ENCODE measurements at regions of chr9 and their contacts with region 1.

Region 1: DNA sequence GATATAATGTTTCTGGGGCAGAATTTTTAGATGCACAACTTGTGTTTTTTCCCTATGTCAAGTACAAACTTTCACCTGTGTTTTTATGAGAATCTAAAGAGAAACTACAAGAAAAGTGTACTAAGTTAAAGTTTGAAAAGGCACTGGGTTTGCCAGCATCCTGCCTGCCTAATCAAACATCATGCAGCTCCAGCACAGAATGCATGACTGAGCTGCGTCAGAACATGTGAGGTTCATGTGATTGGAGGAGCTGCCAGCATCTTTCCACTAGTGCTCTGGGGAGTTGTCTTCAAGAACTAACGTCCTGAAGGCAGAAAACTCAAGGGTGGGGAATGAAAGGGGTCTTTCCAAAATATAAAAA is 46.1 kb upstream of the RIC1 start:
- DNase-seq: peak; percentile 88
- H3K4me3 Mint-ChIP-seq: peak overlapping the region; percentile 40
- H3K27ac Mint-ChIP-seq: peak overlapping the region; percentile 92
- H3K4me1 Mint-ChIP-seq: peaks cover 69% of the 10 kb centered on the region
- H3K27me3 Mint-ChIP-seq: no peaks in the 10 kb centered on the region

Region 2: GRCh38 chr9:5450359-5451091 is 132.3 kb before region 1 on chr9 and contains the start of gene CD274:
- intact Hi-C with region 1: loop called (anchors 1 kb)
- DNase-seq: peak; percentile 95
- H3K4me3 Mint-ChIP-seq: peak within 1 kb of the TSS; percentile 90
- H3K27ac Mint-ChIP-seq: peak within 1 kb of the TSS; percentile 90
- H3K4me1 Mint-ChIP-seq: peaks cover 56% of the 10 kb centered on the region
- H3K27me3 Mint-ChIP-seq: no peaks in the 10 kb centered on the region
- total RNA-seq, gene CD274: 52.1 and 57.6 TPM in 2 replicates

Region 3: DNA sequence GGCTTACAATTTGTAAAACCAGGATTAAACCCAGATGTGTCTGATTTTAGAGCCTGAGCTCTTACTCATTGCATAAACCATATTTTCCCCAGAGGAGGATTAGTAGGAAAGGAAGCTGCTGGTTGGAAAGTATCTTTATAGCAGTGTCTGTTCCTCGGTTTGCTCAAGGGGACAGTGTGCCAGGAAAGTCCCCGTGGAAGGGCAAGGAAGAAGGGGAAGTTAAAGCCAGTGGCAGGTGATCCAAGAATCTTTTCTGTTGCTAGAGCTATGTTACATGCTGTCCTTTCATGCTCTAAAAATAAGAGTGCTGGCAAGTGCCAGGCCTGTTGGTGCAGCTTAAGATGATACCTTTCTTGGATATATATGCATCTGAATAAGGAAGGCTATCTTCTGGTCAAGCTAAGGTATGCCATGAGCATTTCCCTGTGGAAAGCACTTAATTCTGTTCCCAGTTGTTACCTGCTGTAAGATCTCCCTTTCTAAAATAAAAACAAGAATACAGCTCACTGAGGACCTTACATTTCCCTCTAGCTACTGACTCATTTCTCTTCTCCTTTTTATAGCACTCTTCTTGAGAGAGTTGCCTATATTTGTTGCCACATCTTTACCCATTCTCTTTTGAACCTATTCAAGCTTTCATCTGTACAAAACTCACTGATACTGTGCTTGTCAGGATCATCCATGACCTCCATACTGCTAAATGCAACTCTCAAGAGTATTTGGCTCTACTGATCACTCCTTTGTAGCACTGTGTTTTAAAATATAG is 64.5 kb before region 1 on chr9:
- intact Hi-C with region 1: loop called (anchors 2 kb)
- DNase-seq: no peak
- H3K4me3 Mint-ChIP-seq: no peak overlapping the region
- H3K27ac Mint-ChIP-seq: peak overlapping the region; percentile 23
- H3K4me1 Mint-ChIP-seq: peaks cover 28% of the 10 kb centered on the region
- H3K27me3 Mint-ChIP-seq: peaks cover 2% of the 10 kb centered on the region

Region 4: DNA sequence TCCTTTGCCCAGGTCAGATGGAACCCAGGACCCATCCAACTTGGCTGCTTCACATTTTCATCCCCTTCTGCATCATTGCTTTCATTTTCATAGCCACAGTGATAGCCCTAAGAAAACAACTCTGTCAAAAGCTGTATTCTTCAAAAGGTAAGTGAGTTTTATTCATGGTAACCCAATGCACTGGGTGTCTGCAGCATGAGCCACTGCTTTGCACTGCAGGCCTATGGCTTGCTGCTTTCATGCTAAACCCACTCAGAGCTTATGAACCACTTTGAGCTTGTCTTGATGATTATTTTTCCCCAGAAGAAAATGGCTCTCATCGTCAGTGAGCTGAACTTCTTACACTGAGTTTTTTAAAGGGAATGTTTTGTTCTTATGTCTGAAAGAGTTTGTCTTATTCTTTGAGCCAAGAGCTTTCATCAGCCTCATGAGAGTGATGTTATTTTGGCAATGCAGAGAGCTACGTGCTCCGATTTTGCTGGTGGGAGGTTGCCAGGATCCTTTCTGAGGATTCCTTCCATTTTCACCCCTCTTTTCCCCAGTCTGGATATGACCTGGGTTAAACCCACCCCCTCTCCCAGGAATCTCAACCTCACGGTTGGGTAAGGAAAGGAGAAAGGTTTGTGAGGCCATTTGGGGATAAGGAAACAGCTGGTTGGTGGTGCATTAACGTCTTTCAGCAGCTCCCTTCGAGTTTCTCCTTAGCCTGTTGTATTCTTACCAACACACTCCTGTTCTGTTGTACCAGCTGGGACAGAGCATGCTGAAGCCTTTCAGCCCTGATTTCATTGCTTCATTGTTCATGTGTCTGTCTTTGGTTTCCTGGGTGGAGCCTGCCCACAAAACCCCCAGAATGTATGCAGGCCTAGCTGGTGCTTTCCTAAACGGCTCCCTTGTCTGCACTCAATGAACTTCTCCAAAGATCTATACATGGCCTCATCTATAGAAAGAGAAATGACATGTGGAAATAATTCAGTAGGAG is 24.9 kb before region 1 on chr9:
- intact Hi-C with region 1: loop called (anchors 1 kb)
- DNase-seq: peak; percentile 91
- H3K4me3 Mint-ChIP-seq: peak overlapping the region; percentile 70
- H3K27ac Mint-ChIP-seq: peak overlapping the region; percentile 94
- H3K4me1 Mint-ChIP-seq: peaks cover 39% of the 10 kb centered on the region
- H3K27me3 Mint-ChIP-seq: no peaks in the 10 kb centered on the region

Region 5: DNA sequence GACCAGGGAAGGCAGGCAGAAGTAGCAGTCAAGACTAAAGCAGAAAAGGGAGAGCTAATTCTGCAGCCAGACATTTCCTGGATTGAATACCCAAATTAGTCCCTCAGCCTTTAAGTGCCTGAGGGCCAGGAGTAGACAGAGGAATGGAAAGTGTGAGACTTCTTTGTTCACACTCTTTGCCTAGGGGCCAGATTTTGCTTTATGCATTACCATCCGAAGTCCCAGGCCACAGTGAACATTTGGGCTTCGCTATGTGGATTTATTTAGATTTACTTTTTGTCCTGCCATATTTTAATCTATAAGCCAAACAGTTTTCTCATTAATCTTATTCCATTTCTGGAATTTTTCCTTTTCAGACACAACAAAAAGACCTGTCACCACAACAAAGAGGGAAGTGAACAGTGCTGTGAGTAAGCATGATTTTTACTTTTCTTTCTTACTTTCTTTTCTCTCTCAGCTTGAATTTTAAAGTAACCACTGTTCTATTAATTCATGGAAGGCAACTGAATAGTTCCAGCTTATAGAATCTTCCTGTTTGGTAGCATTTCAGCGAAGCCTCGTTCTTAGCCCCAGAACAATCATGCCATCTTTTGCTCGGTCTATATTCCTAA is 19.9 kb before region 1 on chr9:
- intact Hi-C with region 1: loop called (anchors 1 kb)
- DNase-seq: no peak
- H3K4me3 Mint-ChIP-seq: no peak overlapping the region
- H3K27ac Mint-ChIP-seq: peak overlapping the region; percentile 5
- H3K4me1 Mint-ChIP-seq: peaks cover 35% of the 10 kb centered on the region
- H3K27me3 Mint-ChIP-seq: no peaks in the 10 kb centered on the region

Region 6: GRCh38 chr9:5764130-5764868 is 181.5 kb after region 1 on chr9:
- intact Hi-C with region 1: no loop called
- DNase-seq: peak; percentile 73
- H3K4me3 Mint-ChIP-seq: no peak overlapping the region
- H3K27ac Mint-ChIP-seq: peak overlapping the region; percentile 45
- H3K4me1 Mint-ChIP-seq: peaks cover 33% of the 10 kb centered on the region
- H3K27me3 Mint-ChIP-seq: no peaks in the 10 kb centered on the region

Region 7: GRCh38 chr9:5999443-6000101 is 416.8 kb after region 1 on chr9:
- intact Hi-C with region 1: no loop called
- DNase-seq: no peak
- H3K4me3 Mint-ChIP-seq: no peak overlapping the region
- H3K27ac Mint-ChIP-seq: no peak overlapping the region
- H3K4me1 Mint-ChIP-seq: peaks cover 25% of the 10 kb centered on the region
- H3K27me3 Mint-ChIP-seq: no peaks in the 10 kb centered on the region

Region 8: GRCh38 chr9:6383551-6384225 is 800.9 kb after region 1 on chr9:
- intact Hi-C with region 1: no loop called
- DNase-seq: no peak
- H3K4me3 Mint-ChIP-seq: no peak overlapping the region
- H3K27ac Mint-ChIP-seq: no peak overlapping the region
- H3K4me1 Mint-ChIP-seq: no peaks in the 10 kb centered on the region
- H3K27me3 Mint-ChIP-seq: peaks cover 7% of the 10 kb centered on the region